ENCODE measurements at regions of chr17 and their contacts with region 1.

Region 1: DNA sequence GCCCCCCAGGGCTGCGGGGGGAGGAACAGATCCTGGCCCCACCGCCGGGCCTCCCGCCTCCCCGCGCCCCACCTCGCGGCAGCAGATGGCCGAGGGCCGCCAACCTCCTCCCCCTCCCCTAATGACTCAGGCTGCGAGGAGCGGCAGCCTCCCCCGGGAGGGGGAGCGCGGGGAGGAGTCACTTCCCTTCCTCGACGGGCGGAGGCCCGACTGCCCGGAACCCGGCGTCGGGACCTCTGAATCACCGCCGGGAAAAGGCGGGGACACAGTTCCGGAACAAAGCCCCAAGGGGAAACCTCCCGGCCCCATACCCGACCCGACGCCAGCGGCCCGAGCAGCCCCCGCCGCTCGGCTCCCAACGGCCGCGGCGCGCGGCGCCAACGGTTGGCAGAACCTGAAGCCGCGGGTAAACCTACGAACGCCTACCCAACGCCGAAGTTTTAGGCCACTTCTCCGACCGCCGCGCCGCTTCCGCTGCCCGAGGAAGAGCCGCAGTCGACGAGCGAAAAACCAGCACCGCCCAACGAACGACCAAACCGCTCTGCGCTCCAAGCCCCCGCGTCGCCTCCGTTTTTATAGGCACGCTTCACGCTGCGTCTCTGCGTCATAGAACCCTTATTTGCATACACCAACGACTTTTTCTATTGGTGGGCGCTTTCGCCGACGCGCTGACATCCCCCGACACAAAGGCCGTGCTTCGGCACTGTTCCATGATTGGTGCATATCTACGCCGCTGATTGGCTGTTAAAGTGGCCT is 5.2 kb upstream of the UNK start:
- DNase-seq: peak; percentile 100
- ATAC-seq: peak; percentile 55 to 82
- H3K4me3 ChIP-seq: peak overlapping the region; percentile 69
- H3K27ac ChIP-seq: peak overlapping the region; percentile 93 to 95
- H3K4me1 ChIP-seq: peaks cover 41% of the 10 kb centered on the region
- CTCF ChIP-seq: no peak; the same call in 2 of the 3 replicates
- EP300 ChIP-seq: no peak
- POLR2A ChIP-seq: peak; percentile 100
- RAD21 ChIP-seq: no peak

Region 2: DNA sequence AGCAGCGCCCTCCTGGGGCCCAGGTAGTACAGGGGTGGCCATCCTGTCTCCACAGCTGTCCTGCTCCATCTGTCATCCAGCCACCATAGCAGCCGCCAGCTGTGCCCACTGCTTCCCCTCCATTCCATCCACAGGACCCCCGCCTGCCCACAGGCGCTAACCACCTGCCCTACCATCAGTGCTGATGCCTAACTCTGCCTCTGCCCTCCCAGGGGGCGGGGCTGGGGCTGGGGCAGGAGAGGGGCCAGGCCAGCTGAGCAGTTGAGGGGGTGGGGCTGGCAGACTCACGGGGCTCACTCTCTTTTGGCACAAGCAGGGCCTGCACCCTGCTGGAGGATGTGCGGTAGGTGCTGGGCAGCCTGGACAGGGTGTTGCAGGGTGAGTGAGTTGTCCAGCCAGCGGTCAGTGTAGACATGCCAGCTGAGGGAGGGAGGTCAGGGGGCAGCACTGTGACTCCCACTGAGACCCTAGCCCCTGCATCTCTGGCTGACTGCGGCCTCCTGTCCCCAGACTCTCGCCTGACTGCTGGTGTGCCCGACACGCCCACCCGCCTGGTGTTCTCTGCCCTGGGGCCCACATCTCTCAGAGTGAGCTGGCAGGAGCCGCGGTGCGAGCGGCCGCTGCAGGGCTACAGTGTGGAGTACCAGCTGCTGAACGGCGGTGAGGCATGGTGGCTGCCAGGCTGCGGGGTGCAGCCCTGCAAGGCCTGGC is 24.1 kb before region 1 on chr17:
- CTCF ChIA-PET with region 1: interaction called, 131 read pairs
- POLR2A ChIA-PET with region 1: interaction called, 13 read pairs
- DNase-seq: peak in 1 of 2 experiments; percentile 49
- ATAC-seq: peak; percentile 45 to 63; a peak in 5 of 6 replicates
- H3K4me3 ChIP-seq: no peak overlapping the region
- H3K27ac ChIP-seq: no peak overlapping the region
- H3K4me1 ChIP-seq: no peaks in the 10 kb centered on the region
- CTCF ChIP-seq: no peak
- EP300 ChIP-seq: no peak
- POLR2A ChIP-seq: no peak
- RAD21 ChIP-seq: no peak

Region 3: DNA sequence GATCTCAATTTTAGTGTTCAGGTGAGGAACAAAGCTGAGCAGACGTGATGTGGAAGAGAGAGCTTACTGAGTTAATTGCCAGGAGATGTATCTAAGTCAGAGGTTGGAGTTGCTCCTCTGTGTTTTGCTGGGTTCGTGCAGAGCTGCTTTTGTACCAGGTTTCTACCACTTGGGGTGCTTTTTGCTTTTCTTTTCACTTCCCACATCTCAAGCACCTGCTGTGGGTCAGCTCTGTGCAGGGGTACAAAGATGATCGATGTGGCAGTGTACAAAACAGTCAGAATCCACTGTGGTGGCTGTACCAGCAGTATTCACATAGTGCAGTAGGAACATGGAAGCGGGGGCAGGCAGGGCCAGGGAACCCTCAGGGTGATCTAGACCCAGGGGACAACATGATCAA is 20.0 kb after region 1 on chr17:
- CTCF ChIA-PET with region 1: interaction called, 72 read pairs
- POLR2A ChIA-PET with region 1: interaction called, 17 read pairs
- DNase-seq: no peak
- ATAC-seq: peak; percentile 24 to 37; a peak in 4 of 6 replicates
- H3K4me3 ChIP-seq: no peak overlapping the region
- H3K27ac ChIP-seq: no peak overlapping the region
- H3K4me1 ChIP-seq: no peaks in the 10 kb centered on the region
- CTCF ChIP-seq: no peak
- EP300 ChIP-seq: no peak
- POLR2A ChIP-seq: no peak
- RAD21 ChIP-seq: no peak

Region 4: GRCh38 chr17:75845049-75845860 is 65.8 kb after region 1 on chr17:
- CTCF ChIA-PET with region 1: interaction called, 9 read pairs
- POLR2A ChIA-PET with region 1: interaction called, 23 read pairs
- DNase-seq: peak; percentile 91 to 92
- ATAC-seq: peak; percentile 69 to 87
- H3K4me3 ChIP-seq: peak overlapping the region; percentile 0; the same call in 1 of the 3 replicates
- H3K27ac ChIP-seq: peak overlapping the region; percentile 79 to 89
- H3K4me1 ChIP-seq: peaks cover 43% of the 10 kb centered on the region
- CTCF ChIP-seq: peak; percentile 49
- EP300 ChIP-seq: no peak
- POLR2A ChIP-seq: no peak
- RAD21 ChIP-seq: peak in 1 of 2 experiments; percentile 23; a peak in 1 of 5 replicates

Region 5: DNA sequence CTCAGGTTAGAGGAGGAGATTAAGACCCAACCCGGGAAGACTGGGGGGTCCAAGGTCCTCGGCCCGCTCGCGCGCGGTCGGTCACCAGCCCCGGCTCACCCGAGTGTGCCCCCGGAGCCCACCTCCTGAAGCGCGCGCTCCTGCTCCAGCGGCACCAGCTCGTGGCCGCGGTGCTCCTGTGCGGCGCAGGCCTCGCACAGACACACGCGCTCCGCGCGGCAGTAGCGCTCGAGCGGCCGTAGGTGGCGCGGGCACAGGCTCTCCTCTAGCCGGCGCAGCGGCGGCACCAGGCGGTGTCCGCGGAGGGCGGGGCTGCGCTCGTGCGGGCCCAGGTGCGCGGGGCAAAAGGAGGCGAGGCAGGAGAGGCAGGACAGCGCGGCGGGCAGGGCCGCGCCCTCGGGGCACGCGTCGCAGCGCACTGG is 98.4 kb after region 1 on chr17:
- CTCF ChIA-PET with region 1: interaction called, 12 read pairs
- POLR2A ChIA-PET with region 1: interaction called, 52 read pairs
- DNase-seq: peak in 1 of 2 experiments; percentile 86
- ATAC-seq: peak; percentile 60 to 72
- H3K4me3 ChIP-seq: peak overlapping the region; percentile 85
- H3K27ac ChIP-seq: peak overlapping the region; percentile 92 to 94
- H3K4me1 ChIP-seq: peaks cover 36% of the 10 kb centered on the region
- CTCF ChIP-seq: peak; percentile 37
- EP300 ChIP-seq: no peak
- POLR2A ChIP-seq: peak; percentile 18; the same call in 1 of the 2 replicates
- RAD21 ChIP-seq: no peak; a peak in 1 of 5 replicates